ENCODE measurements at regions of chr15 and their contacts with region 1.

Region 1: DNA sequence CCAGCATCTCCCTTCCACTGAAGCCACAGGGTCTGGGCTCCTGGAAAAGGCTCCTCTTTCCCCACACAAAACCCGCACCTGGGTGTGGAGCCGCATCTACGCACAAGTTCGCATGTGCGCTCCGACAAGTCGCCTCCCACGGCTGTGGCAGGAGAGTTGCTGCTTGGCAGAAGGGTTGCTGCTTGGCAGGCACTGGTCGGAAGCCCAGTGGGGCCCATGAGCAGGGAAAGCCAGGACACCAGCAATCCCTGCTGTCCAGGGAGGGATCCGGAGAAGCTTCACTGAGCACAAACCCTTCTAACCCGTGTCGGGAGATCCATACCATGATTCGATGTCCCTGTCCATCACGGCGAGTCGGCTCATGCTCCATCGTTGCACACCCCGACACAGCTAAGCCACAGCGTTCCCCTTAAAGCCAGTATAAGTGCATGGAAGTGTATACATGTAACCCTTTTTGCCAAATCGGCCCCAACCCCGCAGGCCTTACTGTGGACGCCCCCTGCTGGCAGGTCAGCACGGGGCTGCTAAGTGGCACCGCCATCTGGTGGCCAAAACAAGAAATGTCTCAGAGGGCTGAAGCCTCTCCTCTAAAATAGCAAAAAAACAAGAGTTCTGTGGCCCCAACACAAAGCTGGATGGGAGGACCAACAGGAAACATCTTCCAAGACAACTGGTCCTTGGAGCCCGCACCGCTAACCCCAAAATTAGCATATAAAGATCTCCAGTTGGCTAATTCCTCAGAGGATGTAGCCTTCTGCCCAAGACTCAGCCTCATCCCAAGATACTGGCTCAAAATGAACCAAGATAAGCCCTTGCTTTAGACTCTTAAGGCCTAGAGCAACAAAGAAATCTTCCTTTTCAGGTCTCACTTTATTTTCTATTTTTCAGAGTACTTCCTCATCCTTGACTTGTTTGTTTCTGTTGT is 8.3 kb downstream of the ANKRD63 start:
- DNase-seq: peak in 9 of 10 donors; percentile 63 to 83 (median 73)
- H3K4me3 ChIP-seq: no peak overlapping the region
- H3K27ac ChIP-seq: peak overlapping the region in 9 of 59 donors; percentile 6 to 60 (median 28)
- H3K27me3 ChIP-seq: peaks cover 0 to 11% (median under 1%) of the 10 kb centered on the region in 45 donors
- CTCF ChIP-seq: peak in 55 of 56 donors; percentile 94 to 100 (median 100)

Region 2: GRCh38 chr15:38945551-38946298 is 1328.9 kb before region 1 on chr15:
- intact Hi-C with region 1: no loop called
- DNase-seq: no peak
- H3K4me3 ChIP-seq: no peak overlapping the region
- H3K27ac ChIP-seq: no peak overlapping the region
- H3K27me3 ChIP-seq: peaks cover 0 to 8% (median 0%) of the 10 kb centered on the region in 45 donors
- CTCF ChIP-seq: no peak

Region 3: GRCh38 chr15:40044717-40045571 is 229.7 kb before region 1 on chr15:
- intact Hi-C with region 1: loop called (anchors 2 kb)
- DNase-seq: peak; percentile 77 to 86 (median 82)
- H3K4me3 ChIP-seq: peak overlapping the region in 45 of 59 donors; percentile 3 to 56 (median 31)
- H3K27ac ChIP-seq: peak overlapping the region in 10 of 59 donors; percentile 4 to 61 (median 26)
- H3K27me3 ChIP-seq: no peaks in the 10 kb centered on the region
- CTCF ChIP-seq: peak; percentile 42 to 98 (median 88)

Region 4: DNA sequence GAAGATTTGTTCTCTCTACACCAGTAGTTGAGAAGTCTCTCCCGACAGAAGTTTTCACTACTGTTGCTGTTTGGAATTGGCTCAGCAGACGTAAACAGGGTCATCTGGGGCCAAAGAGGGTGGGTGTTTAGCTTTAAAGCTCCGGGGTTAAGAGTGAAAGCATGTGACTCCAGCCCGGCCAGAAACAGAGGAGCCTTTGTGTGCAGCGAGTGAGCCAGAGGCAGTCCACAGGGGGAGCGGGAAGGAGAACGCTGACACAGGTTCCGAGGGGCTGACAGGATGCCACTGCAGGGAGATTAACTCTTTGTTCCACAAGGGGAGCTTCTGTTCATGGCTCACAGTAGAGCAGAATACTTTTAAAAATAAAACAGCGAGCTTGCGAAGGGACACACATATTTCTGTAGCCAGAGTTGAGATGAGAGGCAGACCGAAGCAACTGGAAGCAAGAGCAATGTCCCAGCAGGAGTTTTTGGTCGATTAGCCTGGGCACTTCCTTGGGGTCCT is 192.9 kb before region 1 on chr15:
- intact Hi-C with region 1: no loop called
- DNase-seq: peak; percentile 23 to 85 (median 80)
- H3K4me3 ChIP-seq: peak overlapping the region; percentile 1 to 67 (median 44)
- H3K27ac ChIP-seq: peak overlapping the region in 52 of 59 donors; percentile 4 to 82 (median 62)
- H3K27me3 ChIP-seq: peaks cover 0 to 4% (median 0%) of the 10 kb centered on the region in 45 donors
- CTCF ChIP-seq: peak in 24 of 56 donors; percentile 6 to 49 (median 25)

Region 5: DNA sequence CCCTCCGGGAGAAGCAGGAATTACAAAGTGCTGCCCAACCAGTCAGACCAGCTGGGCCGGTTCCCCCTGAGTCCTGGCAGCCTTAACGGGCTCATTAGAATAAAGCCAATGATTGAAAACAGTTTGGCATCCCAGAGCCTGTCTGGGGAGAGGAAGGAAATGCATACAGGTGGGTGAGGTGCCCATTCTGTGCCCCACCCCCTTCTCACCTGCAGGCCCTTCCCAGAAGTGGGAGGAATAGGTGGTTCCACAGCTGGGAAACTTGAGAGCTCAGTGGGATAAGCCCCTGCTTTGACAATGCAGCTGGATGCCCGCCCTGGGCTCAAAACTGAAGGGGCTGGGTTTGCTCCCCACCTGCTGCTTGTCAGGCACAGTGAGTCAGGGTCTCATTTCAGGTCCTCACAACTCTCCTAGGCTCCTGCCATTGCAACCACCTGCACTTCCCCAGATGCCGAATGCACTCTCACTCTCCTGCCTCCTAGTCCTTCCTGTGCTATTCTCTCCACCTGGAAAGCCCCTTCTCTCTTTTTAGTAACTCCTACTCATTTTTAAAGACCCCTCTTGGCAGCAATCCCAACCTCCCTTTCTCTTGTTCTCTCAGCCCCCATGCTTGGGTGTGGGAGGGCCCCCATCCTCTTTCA is 119.2 kb before region 1 on chr15:
- intact Hi-C with region 1: loop called in 1 of 2 experiments (anchors 5 kb)
- DNase-seq: no peak
- H3K4me3 ChIP-seq: no peak overlapping the region
- H3K27ac ChIP-seq: no peak overlapping the region
- H3K27me3 ChIP-seq: no peaks in the 10 kb centered on the region
- CTCF ChIP-seq: no peak

Region 6: GRCh38 chr15:40232625-40233070 is 42.0 kb before region 1 on chr15:
- intact Hi-C with region 1: loop called in 1 of 2 experiments (anchors 5 kb)
- DNase-seq: no peak
- H3K4me3 ChIP-seq: no peak overlapping the region
- H3K27ac ChIP-seq: peak overlapping the region in 1 of 59 donors; percentile 29
- H3K27me3 ChIP-seq: no peaks in the 10 kb centered on the region
- CTCF ChIP-seq: no peak

Region 7: DNA sequence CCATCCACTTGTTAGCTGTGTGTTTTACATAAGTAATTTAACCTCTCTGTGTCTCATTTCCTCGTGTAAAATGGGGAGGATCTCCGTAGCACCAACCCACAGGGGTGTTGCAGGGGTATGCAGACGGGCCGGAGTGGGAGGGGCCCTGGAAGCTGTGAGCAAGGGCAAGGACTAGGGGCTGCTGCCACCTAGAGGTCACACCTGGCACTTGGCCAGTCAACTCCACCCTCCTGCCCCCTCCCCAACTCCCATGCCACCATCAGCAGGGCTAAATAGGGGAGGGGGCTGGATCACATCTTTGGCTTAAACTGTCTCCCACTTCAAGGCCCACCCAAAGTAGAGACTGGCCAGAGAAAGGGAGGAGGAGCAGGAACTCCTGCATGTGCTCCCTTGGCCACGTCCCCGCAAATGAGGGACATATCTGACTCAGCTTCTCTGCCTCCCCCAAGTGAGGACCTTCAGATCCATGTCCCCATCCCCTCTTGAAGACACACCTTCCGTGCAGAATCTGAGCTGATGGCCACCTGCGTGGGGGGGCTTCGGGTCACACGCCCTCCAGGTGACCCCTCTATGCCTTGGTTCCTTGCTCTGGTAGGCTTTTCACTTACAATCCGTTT is 63.5 kb after region 1 on chr15:
- intact Hi-C with region 1: loop called in 1 of 2 experiments (anchors 5 kb)
- DNase-seq: peak in 4 of 10 donors; percentile 31 to 57 (median 50)
- H3K4me3 ChIP-seq: peak overlapping the region in 9 of 59 donors; percentile 3 to 67 (median 57)
- H3K27ac ChIP-seq: peak overlapping the region in 52 of 59 donors; percentile 79 to 100 (median 98)
- H3K27me3 ChIP-seq: no peaks in the 10 kb centered on the region
- CTCF ChIP-seq: peak; percentile 19 to 78 (median 66)

Region 8: GRCh38 chr15:40471105-40471805 is 196.6 kb after region 1 on chr15:
- intact Hi-C with region 1: no loop called
- DNase-seq: no peak
- H3K4me3 ChIP-seq: peak overlapping the region; percentile 44 to 86 (median 75)
- H3K27ac ChIP-seq: peak overlapping the region in 45 of 59 donors; percentile 5 to 87 (median 68)
- H3K27me3 ChIP-seq: peaks cover 0 to 5% (median 0%) of the 10 kb centered on the region in 45 donors
- CTCF ChIP-seq: no peak

Measured in dorsolateral prefrontal cortex (tissue), 120 donors.